Naive thymus-derived CD4-positive, alpha-beta T cell (primary cell): ENCODE measurements at regions of chr7 and their contacts with region 1.

Region 1: DNA sequence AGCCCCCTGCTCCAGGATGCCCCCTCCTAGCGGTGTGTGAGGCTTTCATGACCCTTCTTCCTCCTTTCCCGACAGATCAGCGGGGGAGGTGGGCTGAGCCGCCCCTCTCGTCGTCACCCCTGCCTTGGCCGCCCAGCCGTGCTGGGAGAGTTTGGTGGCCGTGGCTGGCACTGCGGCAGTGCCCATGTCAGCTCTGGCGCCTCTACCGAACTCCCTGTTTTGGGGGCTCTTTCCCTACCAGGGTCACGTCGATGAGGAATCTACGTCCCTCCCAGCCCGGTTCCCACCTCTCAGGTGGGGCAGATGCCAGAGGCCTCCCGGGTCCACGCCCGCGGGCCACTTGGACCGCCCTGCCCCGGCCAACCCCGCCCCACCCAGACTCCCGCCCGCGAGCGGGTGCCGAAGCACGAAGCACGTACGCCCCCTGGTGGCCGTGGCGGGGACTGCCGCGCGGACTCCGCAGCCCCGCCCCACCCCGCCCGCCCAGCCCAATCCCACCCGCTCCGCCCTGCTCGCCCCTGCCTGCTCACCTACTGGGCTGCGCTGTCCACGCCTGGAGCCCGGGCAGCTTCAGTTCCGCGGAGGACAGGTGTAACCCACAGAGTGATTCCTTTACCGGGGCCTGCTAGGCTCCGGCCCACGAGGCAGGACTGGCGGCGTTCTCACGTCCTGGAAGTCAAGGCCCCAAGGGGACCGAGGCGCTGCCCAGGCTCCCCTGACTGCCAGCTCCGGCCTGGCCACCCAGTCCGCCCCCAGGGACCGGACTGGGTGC is 127.1 kb downstream of the UBE2H start:
- DNase-seq: peak; percentile 66 to 97 (median 82)
- ATAC-seq: peak; percentile 95
- H3K4me3 ChIP-seq: peak overlapping the region; percentile 74
- H3K4me3 Mint-ChIP-seq: peak overlapping the region; percentile 80 to 97 (median 88)
- H3K27ac ChIP-seq: no peak overlapping the region
- H3K27ac Mint-ChIP-seq: peak overlapping the region in 7 of 9 donors; percentile 33 to 85 (median 71)
- H3K4me1 ChIP-seq: no peaks in the 10 kb centered on the region
- H3K4me1 Mint-ChIP-seq: peaks cover 12 to 25% (median 19%) of the 10 kb centered on the region in 7 donors
- H3K27me3 ChIP-seq: no peaks in the 10 kb centered on the region
- H3K27me3 Mint-ChIP-seq: peaks cover 0 to 8% (median 0%) of the 10 kb centered on the region in 5 donors

Region 2: GRCh38 chr7:129367700-129368388 is 457.8 kb before region 1 on chr7:
- CTCF ChIA-PET with region 1: interaction called, 4 read pairs
- POLR2A ChIA-PET with region 1: interaction called, 3 read pairs
- intact Hi-C with region 1: loop called (anchors 1 kb)
- DNase-seq: peak; percentile 25 to 71 (median 60)
- ATAC-seq: peak; percentile 85
- H3K4me3 ChIP-seq: peak overlapping the region; percentile 10
- H3K4me3 Mint-ChIP-seq: peak overlapping the region in 8 of 10 donors; percentile 12 to 88 (median 34)
- H3K27ac ChIP-seq: no peak overlapping the region
- H3K27ac Mint-ChIP-seq: peak overlapping the region in 5 of 9 donors; percentile 10 to 91 (median 25)
- H3K4me1 ChIP-seq: peaks cover 8% of the 10 kb centered on the region in 2 donors
- H3K4me1 Mint-ChIP-seq: peaks cover 10 to 48% (median 16%) of the 10 kb centered on the region in 7 donors
- H3K27me3 ChIP-seq: no peaks in the 10 kb centered on the region
- H3K27me3 Mint-ChIP-seq: no peaks in the 10 kb centered on the region

Region 3: GRCh38 chr7:129578829-129579228 is 246.9 kb before region 1 on chr7:
- CTCF ChIA-PET with region 1: no interaction called
- POLR2A ChIA-PET with region 1: no interaction called
- intact Hi-C with region 1: loop called in 1 of 2 experiments (anchors 2 kb)
- DNase-seq: no peak
- ATAC-seq: no peak
- H3K4me3 ChIP-seq: no peak overlapping the region
- H3K4me3 Mint-ChIP-seq: no peak overlapping the region
- H3K27ac ChIP-seq: no peak overlapping the region
- H3K27ac Mint-ChIP-seq: no peak overlapping the region
- H3K4me1 ChIP-seq: no peaks in the 10 kb centered on the region
- H3K4me1 Mint-ChIP-seq: no peaks in the 10 kb centered on the region
- H3K27me3 ChIP-seq: no peaks in the 10 kb centered on the region
- H3K27me3 Mint-ChIP-seq: peaks cover 0 to 8% (median 0%) of the 10 kb centered on the region in 5 donors

Region 4: DNA sequence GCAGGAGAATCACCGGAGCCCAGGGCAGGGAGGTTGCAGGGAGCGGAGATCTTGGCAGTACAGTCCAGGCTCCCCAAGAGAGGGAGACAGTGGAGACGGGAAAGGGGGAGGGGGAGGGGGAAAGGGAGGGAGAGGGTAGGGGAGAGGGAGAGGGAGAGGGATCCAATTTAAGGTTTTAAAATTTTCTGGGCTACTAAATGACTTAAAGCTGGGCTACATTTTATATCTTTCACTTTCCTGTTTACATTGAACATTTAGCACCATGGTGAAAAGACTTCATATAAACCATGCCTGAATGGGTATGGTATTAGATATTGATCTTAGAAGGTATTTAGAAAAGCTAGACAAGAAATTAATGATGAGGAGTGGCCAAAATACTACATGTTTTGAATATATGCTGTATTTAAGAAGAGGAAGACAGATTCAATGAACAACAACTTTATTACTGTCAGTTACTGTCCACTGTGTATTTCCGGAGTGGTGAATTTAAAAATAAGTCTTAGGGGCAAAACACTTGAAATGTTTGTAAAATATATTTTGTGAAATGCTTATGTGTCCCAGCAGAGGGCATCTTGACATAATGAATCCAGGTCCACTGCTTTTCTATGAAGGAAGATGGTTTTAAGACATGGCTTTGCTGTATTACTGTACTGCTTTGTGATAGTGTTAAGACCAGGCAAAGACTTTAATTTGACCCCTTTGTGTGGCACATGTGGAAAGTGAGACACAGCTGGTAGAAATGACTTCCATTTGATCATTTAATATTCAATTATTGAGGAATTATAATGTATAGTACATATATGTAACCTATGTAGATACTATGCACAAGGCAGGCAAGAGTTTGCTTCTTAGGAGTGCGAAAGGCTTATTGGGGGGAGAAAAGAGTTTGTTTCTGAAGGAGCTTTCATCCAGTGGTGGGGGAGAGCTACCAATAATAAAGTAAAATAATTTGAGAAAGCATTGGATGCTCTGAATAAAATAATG is 161.4 kb before region 1 on chr7:
- CTCF ChIA-PET with region 1: no interaction called
- POLR2A ChIA-PET with region 1: no interaction called
- intact Hi-C with region 1: loop called (anchors 1 kb)
- DNase-seq: peak in 3 of 9 donors; percentile 1 to 2 (median 2)
- ATAC-seq: no peak
- H3K4me3 ChIP-seq: no peak overlapping the region
- H3K4me3 Mint-ChIP-seq: no peak overlapping the region
- H3K27ac ChIP-seq: no peak overlapping the region
- H3K27ac Mint-ChIP-seq: peak overlapping the region in 2 of 9 donors; percentile 1 to 2
- H3K4me1 ChIP-seq: no peaks in the 10 kb centered on the region
- H3K4me1 Mint-ChIP-seq: peaks cover 0 to 17% (median 10%) of the 10 kb centered on the region in 7 donors
- H3K27me3 ChIP-seq: no peaks in the 10 kb centered on the region
- H3K27me3 Mint-ChIP-seq: no peaks in the 10 kb centered on the region

Region 5: GRCh38 chr7:129780257-129780973 is 45.3 kb before region 1 on chr7:
- CTCF ChIA-PET with region 1: no interaction called
- POLR2A ChIA-PET with region 1: no interaction called
- intact Hi-C with region 1: loop called in 1 of 2 experiments (anchors 2 kb)
- DNase-seq: peak in 6 of 9 donors; percentile 23 to 71 (median 38)
- ATAC-seq: peak; percentile 81
- H3K4me3 ChIP-seq: peak overlapping the region; percentile 47
- H3K4me3 Mint-ChIP-seq: peak overlapping the region; percentile 44 to 91 (median 77)
- H3K27ac ChIP-seq: no peak overlapping the region
- H3K27ac Mint-ChIP-seq: no peak overlapping the region
- H3K4me1 ChIP-seq: peaks cover 21 to 51% of the 10 kb centered on the region in 2 donors
- H3K4me1 Mint-ChIP-seq: peaks cover 24 to 42% (median 36%) of the 10 kb centered on the region in 7 donors
- H3K27me3 ChIP-seq: peaks cover 25 to 53% of the 10 kb centered on the region in 2 donors
- H3K27me3 Mint-ChIP-seq: peaks cover 39 to 78% (median 48%) of the 10 kb centered on the region in 5 donors

Region 6: DNA sequence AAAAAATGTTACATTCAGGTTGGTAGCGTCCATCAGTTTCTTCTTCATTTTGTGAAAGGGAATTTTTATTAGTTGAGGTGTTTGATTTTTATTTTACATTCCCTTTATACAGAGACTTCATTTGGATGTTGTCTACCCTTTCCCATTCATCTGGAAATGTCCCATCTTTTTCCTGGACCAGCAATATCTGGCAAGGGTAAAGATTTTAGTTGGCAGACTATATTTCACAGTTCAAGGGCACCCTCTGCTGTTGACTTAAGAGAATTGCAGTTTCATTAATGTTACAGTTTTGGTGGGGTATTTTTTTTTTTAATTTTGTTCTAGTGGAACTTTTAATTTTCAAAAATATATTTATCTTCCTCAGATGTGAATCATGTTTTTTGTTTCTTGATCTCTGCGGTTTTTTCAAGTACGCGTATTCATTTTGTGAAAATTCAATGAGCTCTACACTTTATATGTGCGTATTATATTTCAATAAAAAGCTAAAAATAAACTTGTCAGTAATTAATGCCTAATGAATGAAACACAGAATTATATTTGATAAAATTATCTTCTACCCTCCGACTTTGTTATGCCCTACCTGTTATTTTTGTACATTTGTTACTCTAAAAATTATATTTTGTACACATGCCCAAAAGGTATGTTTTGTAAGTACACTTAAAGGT is 1006.3 kb after region 1 on chr7:
- CTCF ChIA-PET with region 1: no interaction called
- POLR2A ChIA-PET with region 1: no interaction called
- intact Hi-C with region 1: loop called in 1 of 2 experiments (anchors 10 kb)
- DNase-seq: peak in 5 of 9 donors; percentile 15 to 34 (median 25)
- ATAC-seq: peak; percentile 46
- H3K4me3 ChIP-seq: no peak overlapping the region
- H3K4me3 Mint-ChIP-seq: no peak overlapping the region
- H3K27ac ChIP-seq: no peak overlapping the region
- H3K27ac Mint-ChIP-seq: peak overlapping the region in 2 of 9 donors; percentile 16 to 42
- H3K4me1 ChIP-seq: no peaks in the 10 kb centered on the region
- H3K4me1 Mint-ChIP-seq: peaks cover 0 to 6% (median 0%) of the 10 kb centered on the region in 7 donors
- H3K27me3 ChIP-seq: no peaks in the 10 kb centered on the region
- H3K27me3 Mint-ChIP-seq: peaks cover 3 to 22% (median 10%) of the 10 kb centered on the region in 5 donors